ENCODE measurements at regions of chr22 and their contacts with region 1.

Region 1: DNA sequence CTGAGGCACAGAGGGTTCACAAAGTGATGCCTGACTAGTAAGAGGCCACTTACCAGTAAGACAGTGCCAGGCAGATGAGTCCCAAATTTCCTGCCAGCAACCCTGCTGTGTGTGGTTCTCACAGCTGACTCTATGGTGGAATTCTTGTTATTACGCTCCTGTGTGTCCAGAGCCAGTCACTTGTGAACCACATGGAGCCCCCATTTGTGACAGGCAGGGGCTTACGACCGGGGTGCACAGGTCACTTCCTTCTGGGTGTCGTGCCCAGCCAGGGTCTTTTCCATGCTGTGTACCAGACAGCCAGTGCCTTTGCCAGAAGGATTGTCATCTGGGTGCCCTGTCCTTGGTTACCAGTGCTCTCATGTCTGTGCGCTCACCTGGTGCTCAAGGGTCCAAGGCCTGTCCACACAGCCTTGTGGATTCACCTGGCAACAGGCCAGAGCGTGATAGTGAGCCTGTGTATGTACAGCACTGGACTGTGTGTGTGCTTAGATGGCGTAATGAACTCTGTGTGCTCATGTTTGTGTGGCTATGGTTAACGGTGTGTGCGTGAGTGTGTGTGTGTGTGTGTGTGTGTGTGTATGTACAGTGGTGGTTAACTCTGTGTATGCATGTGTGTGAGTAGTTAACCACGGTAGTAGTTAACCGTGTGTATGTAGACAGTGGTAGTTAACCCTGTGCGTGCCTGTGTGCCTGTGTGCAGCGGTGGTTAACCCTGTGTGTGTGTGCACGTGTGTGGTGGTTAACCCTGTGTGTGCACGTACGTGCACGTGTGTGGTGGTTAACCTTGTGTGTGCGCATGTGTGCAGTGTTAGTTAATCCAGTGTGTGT is 18.6 kb downstream of the GRAMD4 start:
- DNase-seq: no peak
- ATAC-seq: peak in 2 of 4 donors; percentile 6 to 12
- H3K4me3 ChIP-seq: no peak overlapping the region
- H3K27ac ChIP-seq: peak overlapping the region; percentile 41
- H3K4me1 ChIP-seq: peaks cover 48% of the 10 kb centered on the region
- H3K27me3 ChIP-seq: no peaks in the 10 kb centered on the region
- CTCF ChIP-seq: no peak

Region 2: DNA sequence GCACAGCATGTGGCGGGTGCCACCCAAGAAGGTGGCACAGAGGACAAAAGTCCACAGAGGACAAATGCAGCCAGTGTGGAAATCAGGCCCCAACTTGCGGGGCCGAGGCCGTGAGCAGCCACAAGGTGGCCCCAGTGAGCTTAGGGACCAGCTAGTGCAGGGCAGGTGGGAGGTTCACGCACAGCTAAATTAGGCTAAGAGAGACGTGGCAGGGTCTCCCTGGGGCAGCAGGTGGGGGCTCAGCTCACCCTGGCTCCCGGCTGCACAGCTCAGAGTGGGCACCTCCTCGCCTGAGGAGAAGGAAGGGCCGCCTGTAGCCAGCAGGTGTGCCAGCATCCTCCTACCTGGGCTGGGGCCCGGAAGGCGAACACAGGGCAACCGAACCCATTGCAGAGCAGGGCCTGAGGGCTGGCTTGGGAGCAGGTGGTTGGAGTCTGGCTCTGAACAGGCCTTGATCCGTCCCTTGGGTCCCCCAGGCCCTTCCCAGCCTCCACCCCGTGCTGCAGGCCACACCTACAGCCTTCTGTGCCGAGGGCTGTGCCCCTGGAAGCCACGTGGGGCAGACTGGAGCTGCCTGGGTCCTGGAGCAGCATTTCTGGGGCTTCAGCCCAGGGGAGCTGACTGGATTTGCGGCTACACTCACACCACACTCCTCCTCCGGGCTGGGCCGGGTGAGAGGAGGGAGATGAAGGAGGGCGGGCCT is 75.3 kb before region 1 on chr22:
- intact Hi-C with region 1: no loop called
- DNase-seq: peak; percentile 77 to 88
- ATAC-seq: peak; percentile 89 to 94 (median 90)
- H3K4me3 ChIP-seq: peak overlapping the region; percentile 8
- H3K27ac ChIP-seq: no peak overlapping the region
- H3K4me1 ChIP-seq: no peaks in the 10 kb centered on the region
- H3K27me3 ChIP-seq: no peaks in the 10 kb centered on the region
- CTCF ChIP-seq: peak; percentile 75

Region 3: GRCh38 chr22:46576556-46577367 is 62.1 kb before region 1 on chr22:
- intact Hi-C with region 1: loop called in 1 of 2 experiments (anchors 2 kb)
- DNase-seq: peak; percentile 64 to 80
- ATAC-seq: peak; percentile 40 to 44 (median 42)
- H3K4me3 ChIP-seq: peak overlapping the region; percentile 89
- H3K27ac ChIP-seq: peak overlapping the region; percentile 81
- H3K4me1 ChIP-seq: peaks cover 44% of the 10 kb centered on the region
- H3K27me3 ChIP-seq: no peaks in the 10 kb centered on the region
- CTCF ChIP-seq: no peak

Region 4: DNA sequence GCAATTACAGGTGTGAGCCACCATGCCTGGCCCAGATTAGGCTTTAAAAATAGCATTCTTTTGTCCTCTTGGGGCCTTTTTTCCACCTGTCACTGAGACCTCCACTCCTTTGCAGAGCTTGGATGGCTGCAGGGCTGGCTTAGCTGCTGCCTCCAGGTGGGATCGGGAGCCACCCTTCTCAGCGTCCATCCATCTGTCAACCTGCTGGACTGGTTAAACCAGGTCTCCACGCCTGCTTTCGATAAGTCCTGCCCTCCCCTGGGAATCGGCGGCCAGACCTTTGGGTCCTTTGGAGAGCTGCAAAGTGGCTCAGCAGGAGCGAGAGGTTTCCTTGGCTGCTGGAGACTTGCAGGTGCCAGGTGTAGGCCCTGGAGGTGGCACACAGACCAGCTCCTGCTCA is 42.0 kb before region 1 on chr22:
- intact Hi-C with region 1: loop called (anchors 5 kb)
- DNase-seq: no peak
- ATAC-seq: no peak
- H3K4me3 ChIP-seq: no peak overlapping the region
- H3K27ac ChIP-seq: no peak overlapping the region
- H3K4me1 ChIP-seq: peaks cover 32% of the 10 kb centered on the region
- H3K27me3 ChIP-seq: no peaks in the 10 kb centered on the region
- CTCF ChIP-seq: no peak

Region 5: GRCh38 chr22:46696229-46696518 is 57.4 kb after region 1 on chr22:
- intact Hi-C with region 1: no loop called
- DNase-seq: peak in 1 of 2 donors; percentile 49
- ATAC-seq: no peak
- H3K4me3 ChIP-seq: no peak overlapping the region
- H3K27ac ChIP-seq: no peak overlapping the region
- H3K4me1 ChIP-seq: no peaks in the 10 kb centered on the region
- H3K27me3 ChIP-seq: no peaks in the 10 kb centered on the region
- CTCF ChIP-seq: no peak